H1 (cell line): ENCODE measurements at regions of chr17 and their contacts with region 1.

Region 1: DNA sequence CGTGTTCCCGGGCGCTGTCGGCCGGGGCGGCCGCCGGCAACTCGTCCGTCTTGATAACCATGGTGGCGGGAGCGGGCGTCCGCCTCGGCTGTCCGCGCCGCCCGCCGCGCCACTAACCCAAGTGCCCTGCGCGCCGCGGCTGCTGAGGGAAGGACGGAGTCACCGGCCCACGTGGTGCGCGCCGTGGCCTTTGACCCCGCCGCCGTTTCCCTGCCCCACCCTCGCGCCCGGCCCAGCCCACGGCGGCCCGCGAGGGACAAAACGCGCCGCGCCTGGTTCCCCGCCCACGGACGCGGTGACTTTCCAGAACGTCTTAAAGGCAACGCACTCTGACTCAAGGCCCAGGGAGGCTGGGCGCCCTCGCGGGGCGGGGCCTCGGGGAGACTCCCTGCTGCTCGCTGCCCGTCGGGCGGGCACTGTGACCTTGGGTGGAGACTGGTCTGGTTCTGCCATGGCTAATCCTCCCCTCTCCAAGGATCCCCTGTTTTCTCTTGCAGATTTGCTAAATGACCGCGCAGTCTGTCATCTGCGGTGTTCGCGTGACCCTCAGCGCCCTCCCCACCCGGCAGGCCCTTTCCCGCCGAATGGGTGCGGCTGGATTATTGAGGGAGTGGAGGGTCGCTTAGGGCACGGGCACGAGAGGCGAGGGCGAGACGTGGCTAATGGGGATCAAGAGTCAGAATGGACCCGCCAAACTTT is at the start of gene CLUH:
- DNase-seq: peak in 1 of 2 experiments; percentile 83
- H3K4me3 ChIP-seq: peak within 1 kb of the TSS; percentile 59 to 66 (median 62)
- H3K27ac ChIP-seq: no peak within 1 kb of the TSS
- H3K4me1 ChIP-seq: peaks cover 4 to 35% (median 24%) of the 10 kb centered on the region in 4 experiments
- H3K27me3 ChIP-seq: peaks cover 0 to 9% (median 6%) of the 10 kb centered on the region in 4 experiments; a peak in 5 of 7 replicates
- CTCF ChIP-seq: no peak
- EP300 ChIP-seq: no peak
- POLR2A ChIP-seq: peak in 1 of 2 experiments; percentile 59; a peak in 1 of 3 replicates
- RAD21 ChIP-seq: no peak
- total RNA-seq, gene CLUH: 93.6 and 98.6 TPM in 2 replicates

Region 2: GRCh38 chr17:2688351-2689342 is 23.1 kb before region 1 on chr17:
- CTCF ChIA-PET with region 1: interaction called, 11 read pairs
- POLR2A ChIA-PET with region 1: interaction called, 16 read pairs
- DNase-seq: peak in 1 of 2 experiments; percentile 51
- H3K4me3 ChIP-seq: no peak overlapping the region
- H3K27ac ChIP-seq: no peak overlapping the region
- H3K4me1 ChIP-seq: peaks cover 0 to 7% (median 0%) of the 10 kb centered on the region in 4 experiments; a peak in 2 of 7 replicates
- H3K27me3 ChIP-seq: no peaks in the 10 kb centered on the region
- CTCF ChIP-seq: no peak
- EP300 ChIP-seq: no peak
- POLR2A ChIP-seq: no peak
- RAD21 ChIP-seq: no peak

Region 3: GRCh38 chr17:2695961-2696760 is 15.6 kb before region 1 on chr17:
- CTCF ChIA-PET with region 1: interaction called, 27 read pairs
- POLR2A ChIA-PET with region 1: interaction called, 6 read pairs
- DNase-seq: no peak
- H3K4me3 ChIP-seq: no peak overlapping the region
- H3K27ac ChIP-seq: no peak overlapping the region
- H3K4me1 ChIP-seq: no peaks in the 10 kb centered on the region; a peak in 1 of 7 replicates
- H3K27me3 ChIP-seq: no peaks in the 10 kb centered on the region
- CTCF ChIP-seq: no peak
- EP300 ChIP-seq: no peak
- POLR2A ChIP-seq: no peak
- RAD21 ChIP-seq: no peak